ENCODE measurements at regions of chr1 and their contacts with region 1.

Region 1: GRCh38 chr1:48581270-48581669 is 109.3 kb upstream of the SPATA6 start:
- DNase-seq: no peak

Region 2: GRCh38 chr1:48680411-48681035 is 99.3 kb after region 1 on chr1:
- intact Hi-C with region 1: loop called in 1 of 2 experiments (anchors 5 kb)
- DNase-seq: no peak

Measured in posterior vena cava (tissue), 2 donors.